Endothelial cell of umbilical vein (primary cell): ENCODE measurements at regions of chr7 and their contacts with region 1.

Region 1: GRCh38 chr7:82605247-82605872 is 161.8 kb upstream of the CACNA2D1 start:
- DNase-seq: peak; percentile 62
- H3K4me3 ChIP-seq: no peak overlapping the region
- H3K27ac ChIP-seq: no peak overlapping the region
- H3K4me1 ChIP-seq: no peaks in the 10 kb centered on the region
- H3K27me3 ChIP-seq: no peaks in the 10 kb centered on the region
- CTCF ChIP-seq: peak; percentile 44 to 57
- POLR2A ChIP-seq: no peak

Region 2: DNA sequence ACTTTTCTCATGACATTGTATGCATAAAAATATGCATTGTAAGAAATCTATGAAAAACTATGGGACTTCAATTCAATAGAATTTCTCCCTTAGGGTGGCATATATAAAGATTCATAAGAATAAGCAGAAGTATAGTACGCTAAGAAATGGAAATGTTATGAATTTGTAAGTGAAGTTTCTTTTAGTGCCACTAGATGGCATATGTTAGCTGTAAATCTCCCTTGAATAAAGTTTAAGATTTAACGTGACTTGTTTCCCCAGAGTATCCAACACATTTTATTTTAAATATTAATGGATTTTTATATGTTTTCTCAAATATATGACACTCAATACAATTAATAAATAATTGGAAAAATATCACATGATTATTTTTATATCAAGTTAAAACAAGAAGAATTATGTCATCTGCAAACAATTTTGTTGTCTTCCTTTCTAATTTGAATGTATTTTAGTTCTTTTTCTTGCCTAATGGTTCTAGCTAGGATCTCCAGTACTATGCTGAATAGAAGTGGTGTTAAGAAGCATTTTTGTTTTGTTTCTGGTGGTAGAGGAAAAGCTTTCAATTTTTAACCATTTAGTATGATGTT is 1122.7 kb before region 1 on chr7:
- CTCF ChIA-PET with region 1: interaction called, 8 read pairs
- POLR2A ChIA-PET with region 1: no interaction called
- dilution Hi-C with region 1: no loop called
- intact Hi-C with region 1: loop called (anchors 1 kb)
- DNase-seq: peak; percentile 40
- H3K4me3 ChIP-seq: no peak overlapping the region
- H3K27ac ChIP-seq: no peak overlapping the region
- H3K4me1 ChIP-seq: no peaks in the 10 kb centered on the region
- H3K27me3 ChIP-seq: no peaks in the 10 kb centered on the region
- CTCF ChIP-seq: peak; percentile 14 to 27
- POLR2A ChIP-seq: no peak

Region 3: GRCh38 chr7:82049891-82050533 is 555.3 kb before region 1 on chr7:
- CTCF ChIA-PET with region 1: interaction called, 81 read pairs
- POLR2A ChIA-PET with region 1: no interaction called
- dilution Hi-C with region 1: no loop called
- intact Hi-C with region 1: no loop called
- DNase-seq: peak; percentile 66
- H3K4me3 ChIP-seq: no peak overlapping the region
- H3K27ac ChIP-seq: peak overlapping the region; percentile 48
- H3K4me1 ChIP-seq: peaks cover 19% of the 10 kb centered on the region
- H3K27me3 ChIP-seq: no peaks in the 10 kb centered on the region
- CTCF ChIP-seq: no peak
- POLR2A ChIP-seq: no peak

Region 4: DNA sequence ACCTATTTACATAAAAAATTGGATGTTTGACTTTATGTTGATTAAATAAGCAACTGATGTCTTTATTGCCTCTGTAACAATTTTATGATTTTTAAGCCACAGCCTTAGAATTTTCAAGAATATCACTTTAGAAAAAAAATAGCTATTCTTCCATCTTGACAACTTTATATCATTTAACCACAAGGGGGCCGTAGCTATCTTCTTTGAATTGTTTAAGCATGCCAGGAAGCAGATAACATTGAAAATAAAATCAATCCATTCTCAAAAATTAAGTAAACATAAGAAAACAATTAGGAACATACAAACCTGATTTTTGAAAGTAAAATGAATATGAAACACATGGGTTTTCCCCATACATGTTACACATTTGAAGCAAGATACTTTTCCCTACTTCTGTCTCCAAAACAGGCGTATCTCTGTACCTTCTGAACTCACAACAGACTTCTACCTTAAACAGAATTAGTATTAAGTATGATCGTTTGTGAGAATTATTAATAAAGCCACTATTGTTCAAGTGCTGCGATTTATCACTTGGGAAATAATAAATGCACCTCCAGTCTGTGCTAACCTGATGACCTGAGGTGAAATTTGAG is 370.8 kb before region 1 on chr7:
- CTCF ChIA-PET with region 1: interaction called, 80 read pairs
- POLR2A ChIA-PET with region 1: no interaction called
- dilution Hi-C with region 1: no loop called
- intact Hi-C with region 1: loop called (anchors 1 kb)
- DNase-seq: peak; percentile 61
- H3K4me3 ChIP-seq: no peak overlapping the region
- H3K27ac ChIP-seq: no peak overlapping the region
- H3K4me1 ChIP-seq: peaks cover 12% of the 10 kb centered on the region
- H3K27me3 ChIP-seq: no peaks in the 10 kb centered on the region
- CTCF ChIP-seq: peak; percentile 20 to 27
- POLR2A ChIP-seq: no peak

Region 5: DNA sequence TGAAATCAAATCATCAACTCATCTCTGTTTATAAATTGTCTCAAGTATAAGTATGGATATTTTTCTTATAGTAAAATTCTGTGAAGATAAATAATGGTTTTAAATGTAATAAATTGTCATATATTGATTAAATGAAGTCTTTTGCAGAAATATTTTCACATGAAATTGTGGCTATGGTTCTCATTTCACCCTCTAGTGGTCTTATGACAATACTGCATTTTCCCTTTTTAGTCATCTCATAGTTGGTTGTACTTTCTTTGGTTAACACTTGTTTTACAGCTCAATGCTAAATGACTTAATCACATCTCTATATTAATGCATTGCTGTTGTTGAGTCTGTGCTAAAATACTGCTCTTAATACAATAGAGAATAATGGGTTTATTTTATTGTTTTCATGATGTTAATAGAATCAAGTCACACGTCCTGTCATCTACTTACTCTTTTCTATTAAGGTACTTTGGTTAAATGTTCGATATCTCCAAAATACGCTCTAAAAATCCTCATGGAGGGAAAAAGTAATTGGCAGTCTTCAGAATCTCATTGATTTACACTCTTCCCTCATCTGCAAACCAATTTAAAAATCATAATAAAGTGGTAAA is 123.8 kb before region 1 on chr7:
- CTCF ChIA-PET with region 1: interaction called, 22 read pairs
- POLR2A ChIA-PET with region 1: no interaction called
- dilution Hi-C with region 1: no loop called
- intact Hi-C with region 1: loop called (anchors 1 kb)
- DNase-seq: peak; percentile 47
- H3K4me3 ChIP-seq: no peak overlapping the region
- H3K27ac ChIP-seq: no peak overlapping the region
- H3K4me1 ChIP-seq: no peaks in the 10 kb centered on the region
- H3K27me3 ChIP-seq: no peaks in the 10 kb centered on the region
- CTCF ChIP-seq: peak; percentile 33 to 55
- POLR2A ChIP-seq: no peak

Region 6: GRCh38 chr7:82615527-82615926 is 10.2 kb after region 1 on chr7:
- CTCF ChIA-PET with region 1: interaction called, 18 read pairs
- POLR2A ChIA-PET with region 1: no interaction called
- dilution Hi-C with region 1: no loop called
- intact Hi-C with region 1: no loop called
- DNase-seq: no peak
- H3K4me3 ChIP-seq: no peak overlapping the region
- H3K27ac ChIP-seq: no peak overlapping the region
- H3K4me1 ChIP-seq: no peaks in the 10 kb centered on the region
- H3K27me3 ChIP-seq: no peaks in the 10 kb centered on the region
- CTCF ChIP-seq: no peak
- POLR2A ChIP-seq: no peak

Region 7: DNA sequence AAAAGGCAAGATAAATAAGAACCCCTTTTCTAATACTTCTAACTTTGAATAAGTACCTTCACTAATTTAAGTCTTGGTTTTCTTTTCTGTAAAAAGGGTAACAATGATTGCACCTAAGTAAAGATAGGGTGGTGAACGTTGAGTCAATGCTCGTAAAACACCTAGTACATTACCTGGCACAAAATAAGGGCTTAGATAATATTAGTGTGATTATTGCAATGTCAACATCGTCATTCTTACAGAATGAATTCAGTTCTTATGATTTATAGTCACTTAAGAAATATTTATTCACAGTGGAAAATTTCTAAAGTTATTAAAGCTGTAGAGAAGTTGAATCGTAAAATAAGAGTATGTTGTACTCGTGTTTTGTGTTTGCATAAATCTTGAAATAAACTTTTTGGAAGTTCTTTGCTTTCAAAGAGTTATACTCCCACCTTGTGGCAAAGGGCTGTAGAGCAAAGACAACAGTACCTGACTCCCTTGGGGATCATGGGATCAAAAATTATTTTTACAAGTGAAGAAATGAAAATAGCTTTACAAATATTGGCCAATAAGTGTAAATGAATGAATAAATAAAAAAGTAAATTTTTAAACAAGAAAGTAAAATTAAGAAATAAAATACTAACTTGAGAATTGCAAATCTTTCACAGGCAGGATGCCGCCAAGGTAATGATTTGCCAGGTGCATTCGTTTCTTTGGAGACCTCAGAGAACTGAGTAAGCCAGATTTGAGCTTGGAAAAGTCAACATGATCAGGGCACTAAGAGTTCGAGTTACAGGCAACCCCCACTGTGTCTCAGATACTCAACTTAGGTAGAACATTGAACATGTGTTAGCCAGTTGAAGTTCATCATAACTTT is 124.0 kb after region 1 on chr7:
- CTCF ChIA-PET with region 1: interaction called, 9 read pairs
- POLR2A ChIA-PET with region 1: no interaction called
- dilution Hi-C with region 1: no loop called
- intact Hi-C with region 1: loop called (anchors 1 kb)
- DNase-seq: peak; percentile 60
- H3K4me3 ChIP-seq: no peak overlapping the region
- H3K27ac ChIP-seq: no peak overlapping the region
- H3K4me1 ChIP-seq: no peaks in the 10 kb centered on the region
- H3K27me3 ChIP-seq: no peaks in the 10 kb centered on the region
- CTCF ChIP-seq: peak; percentile 48 to 62
- POLR2A ChIP-seq: no peak

Region 8: DNA sequence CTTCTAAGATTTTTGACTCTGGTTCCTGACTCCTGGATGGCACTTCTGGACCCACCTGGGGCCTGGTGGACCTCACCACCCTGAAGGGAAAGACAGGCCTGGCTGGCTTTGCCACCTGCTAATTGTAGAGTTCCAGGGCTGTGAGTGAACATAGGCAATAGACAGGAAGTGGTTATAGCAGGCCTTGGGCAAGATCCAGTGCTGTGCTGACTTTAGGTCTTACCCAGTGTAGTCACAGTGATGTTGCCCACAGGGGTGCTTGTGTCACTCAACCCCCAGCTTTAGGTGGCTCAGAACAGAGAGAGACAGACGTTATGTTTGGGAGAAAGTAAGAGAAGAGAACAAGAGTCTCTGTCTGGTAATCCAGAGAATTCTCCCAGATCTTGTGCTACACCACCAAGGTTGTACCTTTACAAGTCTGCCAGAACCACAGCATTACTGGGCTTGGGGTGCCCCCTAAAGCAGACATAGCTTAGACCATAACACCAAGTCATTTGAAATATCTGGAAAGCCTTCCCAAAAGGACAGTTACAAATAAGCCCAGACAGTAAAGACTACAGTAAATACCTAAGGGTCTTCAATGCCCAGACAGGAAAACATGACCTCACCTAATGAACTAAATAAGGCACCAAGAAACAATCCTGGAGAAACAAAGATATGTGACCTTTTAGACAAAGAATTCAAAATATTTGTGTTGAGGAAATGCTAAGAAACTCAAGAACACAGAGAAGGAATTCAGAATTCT is 253.9 kb after region 1 on chr7:
- CTCF ChIA-PET with region 1: no interaction called
- POLR2A ChIA-PET with region 1: no interaction called
- dilution Hi-C with region 1: no loop called
- intact Hi-C with region 1: no loop called
- DNase-seq: peak; percentile 65
- H3K4me3 ChIP-seq: no peak overlapping the region
- H3K27ac ChIP-seq: peak overlapping the region; percentile 98
- H3K4me1 ChIP-seq: peaks cover 18% of the 10 kb centered on the region
- H3K27me3 ChIP-seq: no peaks in the 10 kb centered on the region
- CTCF ChIP-seq: no peak
- POLR2A ChIP-seq: no peak